ENCODE measurements at regions of chr7 and their contacts with region 1.

Region 1: DNA sequence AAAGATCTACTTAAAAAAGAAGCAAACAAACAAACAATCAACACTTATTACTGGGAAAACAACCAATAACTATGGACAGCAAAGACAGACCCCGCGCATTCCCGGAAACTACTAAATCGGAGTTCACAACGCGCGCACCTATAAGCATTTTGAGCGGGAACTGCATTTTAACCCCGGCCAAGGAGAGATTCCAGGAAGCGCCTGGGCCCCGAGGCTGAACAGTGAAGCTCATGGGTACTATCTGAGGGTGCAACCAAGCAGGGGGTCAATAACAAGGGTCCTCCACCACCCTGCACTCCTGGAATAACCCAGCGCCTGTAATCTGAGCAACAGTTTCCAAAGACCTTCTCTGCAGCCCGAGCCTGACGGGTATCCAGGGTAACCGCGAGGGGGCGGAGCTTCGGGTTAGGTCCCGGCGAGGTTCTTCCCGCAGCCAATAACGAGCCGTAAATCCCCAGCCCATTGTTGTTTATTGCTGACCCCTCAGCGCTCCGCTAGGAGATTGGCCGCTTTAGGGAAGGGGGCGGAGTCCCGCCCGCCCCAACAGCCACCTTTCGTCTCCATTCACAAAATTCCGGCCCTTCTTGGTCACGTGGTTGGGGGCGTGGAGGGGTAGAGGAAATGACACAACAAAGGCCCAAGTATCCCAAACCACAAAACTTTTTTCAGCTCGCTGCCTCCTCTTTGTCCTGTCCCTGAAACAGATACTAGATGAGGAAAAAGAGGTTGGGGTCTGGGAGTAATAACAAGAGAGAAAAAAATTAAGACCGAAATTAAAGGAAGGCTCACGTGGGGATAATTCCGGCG is 1.7 kb upstream of the ETV1 start:
- DNase-seq: peak; percentile 94 to 98
- H3K4me3 ChIP-seq: peak overlapping the region; percentile 59
- H3K27ac ChIP-seq: peak overlapping the region; percentile 60
- H3K4me1 ChIP-seq: peaks cover 20% of the 10 kb centered on the region
- H3K27me3 ChIP-seq: no peaks in the 10 kb centered on the region
- CTCF ChIP-seq: peak; percentile 48

Region 2: DNA sequence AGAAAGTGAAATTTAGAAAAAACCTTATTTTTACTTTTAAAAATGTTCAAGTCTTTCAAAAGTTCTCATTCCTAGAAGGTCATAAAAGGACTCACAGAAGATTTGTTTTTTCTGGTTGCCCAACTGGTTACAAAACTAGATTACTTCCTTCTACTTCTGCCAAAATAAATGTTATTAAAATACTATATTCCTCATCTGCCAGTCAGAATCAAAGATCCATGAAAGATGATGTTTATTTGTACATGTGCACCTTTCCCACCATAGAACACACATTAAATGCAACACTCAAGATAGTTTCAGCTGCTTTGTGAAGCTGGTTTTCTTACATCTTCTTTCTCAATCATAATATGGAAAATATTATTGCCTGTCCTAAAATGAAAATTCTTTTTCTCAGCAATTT is 467.1 kb before region 1 on chr7:
- CTCF ChIA-PET with region 1: no interaction called
- POLR2A ChIA-PET with region 1: no interaction called
- intact Hi-C with region 1: loop called (anchors 2 kb)
- DNase-seq: no peak
- H3K4me3 ChIP-seq: no peak overlapping the region
- H3K27ac ChIP-seq: no peak overlapping the region
- H3K4me1 ChIP-seq: no peaks in the 10 kb centered on the region
- H3K27me3 ChIP-seq: no peaks in the 10 kb centered on the region
- CTCF ChIP-seq: no peak

Region 3: DNA sequence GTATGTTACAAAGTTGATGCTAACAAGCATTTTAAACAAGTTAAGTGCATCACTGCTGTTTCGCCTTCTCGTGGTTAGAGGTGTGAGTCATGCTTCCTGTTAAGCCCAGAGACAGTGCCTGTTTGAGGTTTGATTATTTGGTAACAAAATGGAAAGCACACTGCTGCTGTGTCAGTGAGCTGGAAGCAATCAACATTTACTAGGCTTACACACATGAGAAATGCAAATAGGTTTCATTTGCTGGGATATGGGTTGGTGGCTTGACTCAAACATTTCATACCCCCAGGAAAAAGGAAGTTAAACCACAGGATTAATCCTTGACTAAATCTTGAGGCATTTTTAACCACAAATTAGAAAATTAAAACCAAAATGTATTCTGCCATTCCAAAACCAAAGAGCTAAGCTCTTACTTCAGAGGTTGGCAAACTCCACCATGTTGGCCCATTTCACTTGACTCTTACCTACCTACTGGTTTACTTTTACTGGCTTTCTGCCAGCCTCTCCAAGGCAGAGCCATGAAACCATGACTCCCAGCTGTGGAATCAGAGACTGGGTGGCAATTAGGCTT is 140.9 kb before region 1 on chr7:
- CTCF ChIA-PET with region 1: no interaction called
- POLR2A ChIA-PET with region 1: no interaction called
- intact Hi-C with region 1: loop called (anchors 10 kb)
- DNase-seq: peak; percentile 51 to 91
- H3K4me3 ChIP-seq: no peak overlapping the region
- H3K27ac ChIP-seq: peak overlapping the region; percentile 33
- H3K4me1 ChIP-seq: peaks cover 11% of the 10 kb centered on the region
- H3K27me3 ChIP-seq: no peaks in the 10 kb centered on the region
- CTCF ChIP-seq: no peak

Region 4: DNA sequence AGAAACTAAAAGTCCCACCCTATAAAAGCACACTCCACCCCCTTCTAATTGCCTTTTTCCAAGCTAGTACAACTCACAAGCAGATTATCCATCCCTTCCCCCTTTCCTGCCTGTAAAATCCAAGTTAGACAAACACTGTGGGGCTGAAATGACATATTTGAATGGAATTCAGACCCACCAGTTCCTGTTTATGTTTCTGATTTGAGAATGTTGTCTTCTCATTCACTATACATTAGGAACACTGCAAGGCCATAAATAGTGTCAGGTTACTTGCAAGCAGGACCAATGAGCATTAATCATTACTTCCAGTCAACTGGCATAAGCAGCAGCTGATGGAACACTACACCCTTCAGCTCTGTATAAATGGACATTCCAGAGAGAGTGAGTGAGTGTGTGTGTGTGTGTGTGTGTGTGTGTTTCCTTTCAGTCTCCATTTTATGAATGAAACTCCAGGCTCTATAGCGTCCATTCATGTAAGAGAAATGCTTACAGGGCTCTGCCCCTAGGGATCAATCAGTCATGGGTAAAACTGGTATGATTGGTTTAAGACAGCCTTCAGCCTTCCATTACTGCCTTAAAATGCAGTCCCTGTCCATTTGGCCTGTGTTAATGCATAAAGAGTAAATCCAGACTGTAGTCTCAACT is 71.0 kb before region 1 on chr7:
- CTCF ChIA-PET with region 1: interaction called, 6 read pairs
- POLR2A ChIA-PET with region 1: interaction called, 3 read pairs
- intact Hi-C with region 1: loop called (anchors 1 kb)
- DNase-seq: peak; percentile 69 to 100
- H3K4me3 ChIP-seq: peak overlapping the region; percentile 7; the same call in 1 of the 2 replicates
- H3K27ac ChIP-seq: peak overlapping the region; percentile 76
- H3K4me1 ChIP-seq: peaks cover 20% of the 10 kb centered on the region
- H3K27me3 ChIP-seq: no peaks in the 10 kb centered on the region
- CTCF ChIP-seq: no peak

Region 5: DNA sequence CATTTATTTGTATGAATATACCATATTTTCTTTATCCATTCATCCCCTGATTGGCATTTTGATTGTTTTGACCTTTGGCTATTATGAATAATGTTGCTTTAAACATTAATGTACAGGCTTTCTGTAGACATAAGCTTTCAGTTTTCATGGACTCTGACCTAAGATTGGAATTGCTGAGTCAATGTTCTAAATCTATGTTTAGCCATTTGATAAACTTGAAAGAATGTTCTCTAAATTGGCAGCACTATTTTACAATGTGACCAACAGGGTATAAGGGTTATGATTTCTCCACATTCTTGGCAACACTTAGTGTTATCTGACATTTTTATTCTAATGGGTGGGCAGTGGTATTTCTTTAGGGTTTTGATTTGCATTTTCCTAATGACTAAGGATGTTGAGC is 227.9 kb after region 1 on chr7:
- CTCF ChIA-PET with region 1: no interaction called
- POLR2A ChIA-PET with region 1: no interaction called
- intact Hi-C with region 1: no loop called
- DNase-seq: no peak
- H3K4me3 ChIP-seq: no peak overlapping the region
- H3K27ac ChIP-seq: no peak overlapping the region
- H3K4me1 ChIP-seq: no peaks in the 10 kb centered on the region
- H3K27me3 ChIP-seq: no peaks in the 10 kb centered on the region
- CTCF ChIP-seq: no peak

Region 6: DNA sequence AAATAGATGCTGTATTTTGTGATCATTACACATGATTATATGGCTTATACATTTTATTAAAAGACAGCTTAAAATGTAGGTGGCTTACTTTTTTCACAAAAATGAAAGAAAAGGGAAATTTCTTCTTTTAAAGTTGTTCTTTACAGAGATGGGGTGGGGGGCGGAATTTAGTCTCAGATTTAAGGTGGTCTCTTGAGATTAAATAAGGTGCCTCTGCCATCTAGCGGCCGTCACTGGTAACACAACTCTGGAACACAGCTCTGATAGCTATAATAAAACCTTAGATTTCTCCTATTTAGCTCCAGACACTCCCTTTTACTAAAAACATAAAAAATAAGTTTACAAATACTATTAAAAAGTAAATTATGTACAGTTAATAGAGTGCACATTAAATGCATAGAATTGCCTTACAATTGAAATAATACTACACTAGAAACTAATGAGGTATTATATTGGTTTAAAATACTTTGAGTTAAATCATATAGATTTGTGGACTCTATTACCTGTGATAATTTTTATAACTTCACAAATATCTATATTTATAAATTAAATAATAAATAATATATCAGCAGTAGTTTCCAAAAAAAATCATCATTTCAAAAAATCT is 700.5 kb after region 1 on chr7:
- CTCF ChIA-PET with region 1: interaction called, 10 read pairs
- POLR2A ChIA-PET with region 1: no interaction called
- intact Hi-C with region 1: no loop called
- DNase-seq: peak in 1 of 2 experiments; percentile 33
- H3K4me3 ChIP-seq: no peak overlapping the region
- H3K27ac ChIP-seq: no peak overlapping the region
- H3K4me1 ChIP-seq: no peaks in the 10 kb centered on the region
- H3K27me3 ChIP-seq: no peaks in the 10 kb centered on the region
- CTCF ChIP-seq: peak; percentile 100

Measured in PC-9 (cell line).